ENCODE measurements at regions of chr20 and their contacts with region 1.

Region 1: DNA sequence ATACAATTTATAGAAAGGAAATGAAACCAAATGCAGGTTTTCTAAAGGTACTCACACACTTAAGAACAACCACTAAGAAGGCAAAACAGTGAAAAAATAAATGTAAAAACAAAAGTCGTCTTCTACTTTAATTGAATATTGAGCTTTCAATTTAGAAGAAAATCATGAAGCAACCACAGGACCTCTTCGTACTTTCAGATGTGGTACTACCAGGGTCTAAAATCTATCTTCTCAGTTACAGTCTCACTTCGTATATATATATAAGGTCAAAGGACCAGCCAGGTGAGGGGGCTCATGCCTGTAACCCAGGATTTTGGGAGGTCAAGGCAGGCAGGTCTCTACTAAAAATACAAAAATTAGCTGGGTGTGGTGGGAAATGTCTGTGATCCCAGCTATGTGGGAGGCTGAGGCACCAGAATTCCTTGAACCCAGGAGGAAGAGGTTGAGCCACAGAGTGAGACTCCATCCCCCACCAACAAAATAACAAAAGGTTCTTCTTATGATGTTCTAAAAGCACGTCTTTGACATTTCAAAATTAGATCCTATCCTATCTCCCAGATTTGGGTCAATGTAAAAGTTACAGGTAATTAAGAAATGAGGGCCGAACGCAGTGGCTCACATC is 12.5 kb downstream of the ROMO1 start:
- DNase-seq: no peak
- ATAC-seq: no peak
- H3K4me3 ChIP-seq: no peak overlapping the region
- H3K27ac ChIP-seq: no peak overlapping the region
- H3K4me1 ChIP-seq: peaks cover 20% of the 10 kb centered on the region; the same call in 1 of the 3 replicates
- CTCF ChIP-seq: no peak
- EP300 ChIP-seq: no peak
- POLR2A ChIP-seq: no peak
- RAD21 ChIP-seq: no peak

Region 2: DNA sequence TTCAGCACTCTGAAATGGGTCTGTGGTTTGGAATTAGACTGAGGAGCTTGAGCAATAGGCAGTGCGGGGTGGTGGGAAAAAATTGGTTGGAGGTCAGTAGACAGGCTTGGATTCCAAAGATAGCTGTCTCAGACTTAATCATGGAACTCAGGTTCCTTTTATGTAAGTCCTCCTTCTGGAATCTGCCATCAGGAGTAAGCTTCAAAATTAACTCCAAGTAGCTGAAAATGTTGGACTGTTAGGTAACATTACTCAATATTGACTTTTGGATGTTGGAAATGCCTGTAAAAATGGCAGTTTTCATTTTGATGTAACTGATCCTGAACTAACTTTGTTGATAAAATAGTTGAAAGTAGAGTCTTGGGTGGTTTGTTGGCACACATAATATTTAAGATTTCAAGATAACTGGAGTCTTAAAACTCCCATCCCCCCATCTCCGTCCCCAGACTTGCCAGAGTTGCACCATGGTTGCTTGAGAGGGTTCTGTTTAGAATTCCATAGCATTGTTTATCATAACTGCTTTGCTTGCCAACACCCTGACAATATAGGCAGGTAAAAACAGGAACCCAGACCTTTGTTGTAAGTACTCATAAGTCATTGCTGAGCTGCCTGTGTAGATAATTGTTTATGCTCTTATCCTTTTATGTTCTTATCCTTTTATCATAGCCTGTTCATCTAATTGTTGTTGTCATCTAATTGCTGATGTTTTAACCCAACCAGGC is 143.2 kb after region 1 on chr20:
- CTCF ChIA-PET with region 1: no interaction called
- POLR2A ChIA-PET with region 1: interaction called, 13 read pairs
- DNase-seq: peak in 1 of 2 experiments; percentile 57
- ATAC-seq: peak in 1 of 2 experiments; percentile 53; a peak in 3 of 6 replicates
- H3K4me3 ChIP-seq: no peak overlapping the region
- H3K27ac ChIP-seq: peak overlapping the region; percentile 23 to 64; a peak in 5 of 6 replicates
- H3K4me1 ChIP-seq: peaks cover 28% of the 10 kb centered on the region
- CTCF ChIP-seq: no peak
- EP300 ChIP-seq: peak in 1 of 2 experiments; percentile 69; a peak in 2 of 5 replicates
- POLR2A ChIP-seq: no peak
- RAD21 ChIP-seq: no peak

Region 3: GRCh38 chr20:35871311-35871771 is 159.6 kb after region 1 on chr20:
- CTCF ChIA-PET with region 1: no interaction called
- POLR2A ChIA-PET with region 1: no interaction called
- DNase-seq: peak in 1 of 2 experiments; percentile 50
- ATAC-seq: peak; percentile 70 to 74; a peak in 5 of 6 replicates
- H3K4me3 ChIP-seq: no peak overlapping the region
- H3K27ac ChIP-seq: peak overlapping the region; percentile 60 to 65
- H3K4me1 ChIP-seq: peaks cover 70% of the 10 kb centered on the region
- CTCF ChIP-seq: no peak
- EP300 ChIP-seq: no peak
- POLR2A ChIP-seq: no peak
- RAD21 ChIP-seq: no peak

Measured in A549 (cell line).